ENCODE measurements at regions of chr15 and their contacts with region 1.

Region 1: GRCh38 chr15:33837294-33837693 is 131.0 kb upstream of the CHRM5 start:
- DNase-seq: no peak
- ATAC-seq: no peak
- H3K4me3 ChIP-seq: no peak overlapping the region
- H3K27ac ChIP-seq: no peak overlapping the region
- H3K4me1 ChIP-seq: no peaks in the 10 kb centered on the region
- H3K27me3 ChIP-seq: no peaks in the 10 kb centered on the region; a peak in 1 of 4 replicates
- CTCF ChIP-seq: no peak
- EP300 ChIP-seq: no peak
- POLR2A ChIP-seq: no peak
- RAD21 ChIP-seq: no peak

Region 2: GRCh38 chr15:33801954-33802353 is 35.3 kb before region 1 on chr15:
- CTCF ChIA-PET with region 1: no interaction called
- POLR2A ChIA-PET with region 1: no interaction called
- RAD21 ChIA-PET with region 1: no interaction called
- SMC1A ChIA-PET with region 1: no interaction called
- in situ Hi-C with region 1: no loop called
- intact Hi-C with region 1: loop called (anchors 2 kb)
- DNase-seq: no peak
- ATAC-seq: no peak
- H3K4me3 ChIP-seq: no peak overlapping the region
- H3K27ac ChIP-seq: no peak overlapping the region
- H3K4me1 ChIP-seq: no peaks in the 10 kb centered on the region
- H3K27me3 ChIP-seq: no peaks in the 10 kb centered on the region; a peak in 1 of 4 replicates
- CTCF ChIP-seq: no peak
- EP300 ChIP-seq: no peak
- POLR2A ChIP-seq: no peak
- RAD21 ChIP-seq: no peak

Region 3: GRCh38 chr15:33813891-33814290 is 23.4 kb before region 1 on chr15:
- CTCF ChIA-PET with region 1: no interaction called
- POLR2A ChIA-PET with region 1: no interaction called
- RAD21 ChIA-PET with region 1: no interaction called
- SMC1A ChIA-PET with region 1: no interaction called
- in situ Hi-C with region 1: no loop called
- intact Hi-C with region 1: no loop called
- DNase-seq: no peak
- ATAC-seq: no peak
- H3K4me3 ChIP-seq: no peak overlapping the region
- H3K27ac ChIP-seq: no peak overlapping the region
- H3K4me1 ChIP-seq: no peaks in the 10 kb centered on the region
- H3K27me3 ChIP-seq: no peaks in the 10 kb centered on the region
- CTCF ChIP-seq: no peak
- EP300 ChIP-seq: no peak
- POLR2A ChIP-seq: no peak
- RAD21 ChIP-seq: no peak

Measured in GM12878 (cell line).